ENCODE measurements at regions of chr1 and their contacts with region 1.

Region 1: GRCh38 chr1:70034403-70034802 is 171.0 kb downstream of the LRRC40 start:
- DNase-seq: no peak
- ATAC-seq: no peak
- H3K4me3 ChIP-seq: no peak overlapping the region
- H3K27ac ChIP-seq: no peak overlapping the region
- H3K4me1 ChIP-seq: no peaks in the 10 kb centered on the region
- H3K27me3 ChIP-seq: no peaks in the 10 kb centered on the region
- CTCF ChIP-seq: peak; percentile 17; the same call in 1 of the 2 replicates

Region 2: DNA sequence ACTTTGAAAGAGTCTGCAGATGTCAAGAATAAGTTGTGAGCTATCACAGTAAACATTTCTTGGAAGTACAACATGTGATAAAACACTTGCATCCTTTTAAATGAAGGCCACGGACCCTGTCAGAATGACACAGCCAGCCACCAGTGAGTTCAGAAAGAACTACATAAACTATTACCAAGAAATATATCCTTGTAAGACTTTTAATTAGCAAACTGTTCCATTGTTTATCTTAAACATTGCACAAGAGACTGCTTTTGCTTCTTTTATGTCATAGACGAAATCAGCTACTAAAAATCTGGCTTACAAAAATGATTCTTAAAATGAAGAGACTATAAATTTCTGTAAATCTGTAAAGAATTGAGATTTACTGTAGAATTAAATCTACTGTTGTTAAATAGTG is 448.7 kb before region 1 on chr1:
- CTCF ChIA-PET with region 1: no interaction called
- POLR2A ChIA-PET with region 1: no interaction called
- in situ Hi-C with region 1: no loop called
- intact Hi-C with region 1: no loop called
- DNase-seq: no peak
- ATAC-seq: no peak
- H3K4me3 ChIP-seq: no peak overlapping the region
- H3K27ac ChIP-seq: no peak overlapping the region
- H3K4me1 ChIP-seq: no peaks in the 10 kb centered on the region
- H3K27me3 ChIP-seq: no peaks in the 10 kb centered on the region
- CTCF ChIP-seq: no peak

Region 3: DNA sequence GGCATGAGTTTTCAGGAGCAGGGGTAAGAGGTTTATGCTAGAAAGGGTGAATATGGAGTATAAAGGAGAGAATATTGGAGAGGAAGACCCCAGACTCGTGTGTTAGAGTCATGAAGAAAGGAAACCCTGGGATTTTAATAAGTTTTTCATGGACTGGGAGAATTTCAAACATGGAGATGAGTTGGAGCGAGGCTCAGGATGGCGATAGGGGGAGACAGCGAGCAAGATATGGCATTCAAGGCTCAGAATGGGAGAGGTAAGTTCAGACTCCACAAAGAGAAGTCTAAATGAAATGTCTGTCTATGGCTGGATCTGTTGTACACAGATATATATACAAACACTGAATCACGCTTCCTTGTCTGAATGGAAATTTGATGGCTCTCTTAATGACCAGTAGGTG is 78.4 kb after region 1 on chr1:
- CTCF ChIA-PET with region 1: interaction called, 10 read pairs
- POLR2A ChIA-PET with region 1: no interaction called
- in situ Hi-C with region 1: no loop called
- intact Hi-C with region 1: no loop called
- DNase-seq: no peak
- ATAC-seq: no peak
- H3K4me3 ChIP-seq: no peak overlapping the region
- H3K27ac ChIP-seq: no peak overlapping the region
- H3K4me1 ChIP-seq: no peaks in the 10 kb centered on the region
- H3K27me3 ChIP-seq: no peaks in the 10 kb centered on the region
- CTCF ChIP-seq: peak; percentile 52

Region 4: DNA sequence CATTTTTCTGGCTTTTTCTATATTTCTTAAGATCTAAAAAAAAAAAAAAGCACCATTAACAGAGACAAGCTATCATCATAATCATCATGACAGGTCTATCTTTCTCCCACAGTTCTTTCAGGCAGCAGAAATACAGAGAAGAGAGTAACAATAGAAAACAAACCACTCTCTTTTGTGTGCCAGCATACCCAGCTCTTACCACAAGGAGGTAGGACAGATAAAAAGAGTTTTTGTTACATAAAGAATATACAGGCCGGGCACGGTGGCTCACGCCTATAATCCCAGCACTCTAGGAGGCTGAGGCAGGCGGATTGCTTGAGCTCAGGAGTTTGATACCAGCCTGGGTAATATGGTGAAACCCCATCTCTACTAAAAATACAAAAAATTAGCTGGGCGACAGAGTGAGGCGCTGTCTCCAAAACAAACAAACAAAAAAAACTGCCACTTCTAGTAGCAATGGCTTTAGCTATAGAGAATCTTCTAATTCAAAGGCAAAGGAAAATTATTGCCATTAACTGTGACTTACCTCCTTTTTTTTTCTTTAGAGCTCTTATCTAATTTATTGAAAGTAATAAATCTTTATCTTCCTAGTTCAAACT is 280.4 kb after region 1 on chr1:
- CTCF ChIA-PET with region 1: no interaction called
- POLR2A ChIA-PET with region 1: no interaction called
- in situ Hi-C with region 1: no loop called
- intact Hi-C with region 1: no loop called
- DNase-seq: no peak
- ATAC-seq: no peak
- H3K4me3 ChIP-seq: no peak overlapping the region
- H3K27ac ChIP-seq: no peak overlapping the region
- H3K4me1 ChIP-seq: no peaks in the 10 kb centered on the region; the same call in none of the 2 replicates
- H3K27me3 ChIP-seq: no peaks in the 10 kb centered on the region
- CTCF ChIP-seq: no peak; the same call in 1 of the 2 replicates